Caco-2 (cell line): ENCODE measurements at regions of chr6 and their contacts with region 1.

Region 1: DNA sequence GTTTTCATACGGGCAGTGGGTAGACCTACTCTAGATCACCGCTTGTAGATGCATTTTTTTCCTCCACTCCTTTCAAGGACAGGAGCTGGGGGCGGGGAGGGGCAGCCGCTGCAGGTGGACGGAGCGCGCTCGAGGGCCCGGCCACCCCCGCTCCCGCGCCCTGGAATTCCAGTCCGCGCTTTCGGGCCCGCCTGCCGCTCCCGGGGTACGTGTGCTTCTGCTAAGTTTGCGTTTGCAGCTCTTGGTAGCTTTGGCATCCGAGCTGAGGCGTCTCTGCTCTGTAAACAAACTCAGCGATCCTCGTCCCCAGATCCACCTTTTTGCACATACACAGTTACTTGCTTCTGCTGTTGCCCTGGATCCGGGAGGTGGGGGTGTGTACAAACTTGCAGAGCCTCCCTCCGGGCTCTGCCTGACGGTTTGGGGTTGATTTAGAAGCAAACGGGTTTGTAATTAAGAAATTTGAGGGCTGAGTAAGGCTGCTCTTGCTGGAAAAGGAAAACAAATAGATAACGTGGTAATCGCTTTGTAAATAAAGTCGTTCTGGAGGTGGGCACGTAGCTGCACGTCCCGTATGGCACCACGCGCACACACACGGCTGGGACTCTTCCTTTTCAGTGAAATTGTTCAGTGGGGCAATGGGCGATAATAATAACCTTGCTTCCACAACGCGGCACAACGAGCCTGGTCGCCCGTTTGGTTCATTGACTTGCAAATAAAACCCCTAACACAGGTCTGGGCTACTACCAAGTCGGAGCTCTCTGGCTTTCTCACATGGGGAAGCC is 976 bp upstream of the CITED2 start:
- DNase-seq: peak; percentile 95 to 96
- H3K4me3 ChIP-seq: peak overlapping the region; percentile 90
- H3K4me3 Mint-ChIP-seq: peak overlapping the region; percentile 99
- H3K27ac Mint-ChIP-seq: peak overlapping the region; percentile 95
- H3K4me1 ChIP-seq: peaks cover 50% of the 10 kb centered on the region
- H3K4me1 Mint-ChIP-seq: peaks cover 41% of the 10 kb centered on the region
- H3K27me3 ChIP-seq: no peaks in the 10 kb centered on the region
- H3K27me3 Mint-ChIP-seq: no peaks in the 10 kb centered on the region
- CTCF ChIP-seq: no peak

Region 2: DNA sequence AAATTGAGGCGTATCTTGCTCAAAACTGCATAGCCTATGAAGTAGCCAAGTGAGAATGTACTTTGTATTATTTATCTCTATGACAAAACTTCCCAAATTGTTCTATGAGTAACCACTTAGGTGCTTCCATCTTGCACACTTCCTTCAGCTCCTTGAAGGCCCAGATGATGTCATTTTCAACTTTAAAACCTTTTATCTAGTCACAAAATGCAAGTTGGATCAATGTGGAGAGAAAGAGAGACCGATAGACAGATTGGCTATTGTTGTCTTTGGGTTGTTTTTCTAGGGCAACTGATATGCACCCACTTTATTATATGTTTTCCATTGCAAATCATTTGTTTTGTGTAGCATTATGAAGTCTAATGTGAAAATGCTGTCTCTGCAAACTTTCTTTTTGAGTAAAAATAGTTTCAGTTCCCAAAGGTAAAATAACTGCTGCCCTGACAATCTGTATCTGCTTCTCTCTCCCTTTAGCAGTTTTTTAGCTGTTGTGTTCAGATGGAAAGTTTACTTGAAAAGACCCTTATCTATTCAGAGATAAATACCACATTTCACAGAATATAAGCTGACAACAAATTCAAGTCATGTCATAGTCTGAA is 72.7 kb after region 1 on chr6:
- CTCF ChIA-PET with region 1: no interaction called
- POLR2A ChIA-PET with region 1: no interaction called
- intact Hi-C with region 1: loop called (anchors 5 kb)
- DNase-seq: no peak
- H3K4me3 ChIP-seq: no peak overlapping the region
- H3K4me3 Mint-ChIP-seq: no peak overlapping the region
- H3K27ac Mint-ChIP-seq: peak overlapping the region; percentile 32
- H3K4me1 ChIP-seq: peaks cover 23% of the 10 kb centered on the region
- H3K4me1 Mint-ChIP-seq: peaks cover 27% of the 10 kb centered on the region
- H3K27me3 ChIP-seq: no peaks in the 10 kb centered on the region
- H3K27me3 Mint-ChIP-seq: no peaks in the 10 kb centered on the region
- CTCF ChIP-seq: no peak

Region 3: GRCh38 chr6:139597771-139598755 is 222.6 kb after region 1 on chr6:
- CTCF ChIA-PET with region 1: interaction called, 3 read pairs
- POLR2A ChIA-PET with region 1: interaction called, 10 read pairs
- intact Hi-C with region 1: no loop called
- DNase-seq: peak; percentile 78 to 81
- H3K4me3 ChIP-seq: no peak overlapping the region
- H3K4me3 Mint-ChIP-seq: peak overlapping the region; percentile 59
- H3K27ac Mint-ChIP-seq: peak overlapping the region; percentile 94
- H3K4me1 ChIP-seq: peaks cover 39% of the 10 kb centered on the region
- H3K4me1 Mint-ChIP-seq: peaks cover 31% of the 10 kb centered on the region
- H3K27me3 ChIP-seq: no peaks in the 10 kb centered on the region
- H3K27me3 Mint-ChIP-seq: no peaks in the 10 kb centered on the region
- CTCF ChIP-seq: no peak

Region 4: GRCh38 chr6:139753198-139753861 is 377.9 kb after region 1 on chr6:
- CTCF ChIA-PET with region 1: interaction called, 3 read pairs
- POLR2A ChIA-PET with region 1: interaction called, 8 read pairs
- intact Hi-C with region 1: loop called (anchors 1 kb)
- DNase-seq: peak; percentile 38 to 56
- H3K4me3 ChIP-seq: no peak overlapping the region
- H3K4me3 Mint-ChIP-seq: no peak overlapping the region
- H3K27ac Mint-ChIP-seq: peak overlapping the region; percentile 77
- H3K4me1 ChIP-seq: peaks cover 77% of the 10 kb centered on the region
- H3K4me1 Mint-ChIP-seq: peaks cover 58% of the 10 kb centered on the region
- H3K27me3 ChIP-seq: no peaks in the 10 kb centered on the region
- H3K27me3 Mint-ChIP-seq: no peaks in the 10 kb centered on the region
- CTCF ChIP-seq: no peak

Region 5: GRCh38 chr6:139927236-139927635 is 551.8 kb after region 1 on chr6:
- CTCF ChIA-PET with region 1: interaction called, 8 read pairs
- POLR2A ChIA-PET with region 1: no interaction called
- intact Hi-C with region 1: loop called (anchors 2 kb)
- DNase-seq: no peak
- H3K4me3 ChIP-seq: no peak overlapping the region
- H3K4me3 Mint-ChIP-seq: no peak overlapping the region
- H3K27ac Mint-ChIP-seq: no peak overlapping the region
- H3K4me1 ChIP-seq: peaks cover 20% of the 10 kb centered on the region
- H3K4me1 Mint-ChIP-seq: peaks cover 15% of the 10 kb centered on the region
- H3K27me3 ChIP-seq: no peaks in the 10 kb centered on the region
- H3K27me3 Mint-ChIP-seq: no peaks in the 10 kb centered on the region
- CTCF ChIP-seq: no peak